ENCODE measurements at regions of chr16 and their contacts with region 1.

Region 1: GRCh38 chr16:75471723-75472633 is 7.5 kb upstream of the TMEM170A start:
- DNase-seq: peak; percentile 37 to 39
- ATAC-seq: peak; percentile 97 to 99
- H3K4me3 ChIP-seq: no peak overlapping the region
- H3K27ac ChIP-seq: no peak overlapping the region
- H3K4me1 ChIP-seq: no peaks in the 10 kb centered on the region
- H3K27me3 ChIP-seq: no peaks in the 10 kb centered on the region
- CTCF ChIP-seq: peak; percentile 58 to 76 (median 72)
- POLR2A ChIP-seq: no peak

Region 2: GRCh38 chr16:75514296-75514695 is 42.3 kb after region 1 on chr16:
- in situ Hi-C with region 1: loop called in 2 of 4 experiments (anchors 5 to 10 kb)
- intact Hi-C with region 1: loop called (anchors 1 kb)
- DNase-seq: no peak
- ATAC-seq: no peak
- H3K4me3 ChIP-seq: no peak overlapping the region
- H3K27ac ChIP-seq: no peak overlapping the region
- H3K4me1 ChIP-seq: peaks cover 0 to 6% of the 10 kb centered on the region in 2 donors
- H3K27me3 ChIP-seq: no peaks in the 10 kb centered on the region
- CTCF ChIP-seq: no peak
- POLR2A ChIP-seq: no peak